ENCODE measurements at regions of chr12 and their contacts with region 1.

Region 1: DNA sequence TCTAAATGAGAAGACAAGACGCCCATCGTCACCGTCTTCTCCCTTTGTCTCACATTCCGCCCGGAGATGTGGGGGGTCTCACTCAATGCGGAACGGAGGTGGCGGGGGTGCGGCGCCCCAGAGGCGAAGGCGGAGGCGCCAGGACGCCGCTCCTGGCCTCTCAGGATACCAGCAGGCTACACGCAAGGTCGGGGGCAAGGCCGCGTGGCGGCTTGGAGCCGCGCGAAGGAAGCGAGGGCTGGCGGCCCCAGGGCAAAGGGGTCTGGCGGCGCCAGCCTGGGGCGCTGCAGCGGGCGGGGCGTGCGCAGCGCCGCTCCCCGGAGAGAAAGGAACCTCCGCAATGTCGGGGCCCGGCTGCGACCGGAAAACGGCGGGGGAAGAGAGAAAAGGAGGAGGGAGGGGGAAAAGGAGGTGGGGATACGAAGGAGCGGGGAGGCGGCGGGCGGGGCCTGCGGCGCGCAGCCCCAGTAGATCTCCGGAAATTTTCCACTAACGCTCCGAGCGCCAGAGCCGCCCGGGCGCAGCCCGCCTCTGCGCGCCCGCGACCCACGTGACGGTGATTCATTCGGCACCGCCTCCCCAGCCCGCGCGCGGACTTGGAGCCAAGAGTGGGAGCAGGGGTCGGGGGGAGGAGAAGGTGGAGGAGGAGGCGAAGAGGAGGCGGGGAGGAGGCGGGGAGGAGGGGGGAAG is 10.5 kb upstream of the SLC38A2 start:
- DNase-seq: peak; percentile 98
- ATAC-seq: peak; percentile 62
- H3K4me3 ChIP-seq: peak overlapping the region; percentile 77
- H3K27ac ChIP-seq: peak overlapping the region; percentile 94
- H3K4me1 ChIP-seq: peaks cover 44% of the 10 kb centered on the region
- H3K27me3 ChIP-seq: no peaks in the 10 kb centered on the region
- CTCF ChIP-seq: peak; percentile 40; the same call in 1 of the 2 replicates

Region 2: GRCh38 chr12:46209914-46210872 is 172.9 kb before region 1 on chr12:
- CTCF ChIA-PET with region 1: no interaction called
- POLR2A ChIA-PET with region 1: no interaction called
- intact Hi-C with region 1: no loop called
- DNase-seq: peak; percentile 91
- ATAC-seq: peak; percentile 75
- H3K4me3 ChIP-seq: peak overlapping the region; percentile 26; the same call in 1 of the 2 replicates
- H3K27ac ChIP-seq: peak overlapping the region; percentile 90
- H3K4me1 ChIP-seq: peaks cover 35% of the 10 kb centered on the region
- H3K27me3 ChIP-seq: no peaks in the 10 kb centered on the region
- CTCF ChIP-seq: no peak

Region 3: GRCh38 chr12:46372544-46373110 is 10.5 kb before region 1 on chr12 and contains the start of gene SLC38A2:
- CTCF ChIA-PET with region 1: no interaction called
- POLR2A ChIA-PET with region 1: interaction called, 8 read pairs
- intact Hi-C with region 1: loop called (anchors 1 kb)
- DNase-seq: peak; percentile 93
- ATAC-seq: peak; percentile 85
- H3K4me3 ChIP-seq: peak within 1 kb of the TSS; percentile 83
- H3K27ac ChIP-seq: peak within 1 kb of the TSS; percentile 80
- H3K4me1 ChIP-seq: peaks cover 40% of the 10 kb centered on the region
- H3K27me3 ChIP-seq: no peaks in the 10 kb centered on the region
- CTCF ChIP-seq: no peak
- total RNA-seq, gene SLC38A2: 214 and 232 TPM in 2 replicates

Region 4: GRCh38 chr12:46430340-46430948 is 47.3 kb after region 1 on chr12:
- CTCF ChIA-PET with region 1: interaction called, 5 read pairs
- POLR2A ChIA-PET with region 1: no interaction called
- intact Hi-C with region 1: loop called (anchors 1 kb)
- DNase-seq: peak; percentile 95
- ATAC-seq: peak; percentile 77
- H3K4me3 ChIP-seq: peak overlapping the region; percentile 28; the same call in 1 of the 2 replicates
- H3K27ac ChIP-seq: peak overlapping the region; percentile 96
- H3K4me1 ChIP-seq: peaks cover 45% of the 10 kb centered on the region
- H3K27me3 ChIP-seq: no peaks in the 10 kb centered on the region
- CTCF ChIP-seq: no peak

Region 5: DNA sequence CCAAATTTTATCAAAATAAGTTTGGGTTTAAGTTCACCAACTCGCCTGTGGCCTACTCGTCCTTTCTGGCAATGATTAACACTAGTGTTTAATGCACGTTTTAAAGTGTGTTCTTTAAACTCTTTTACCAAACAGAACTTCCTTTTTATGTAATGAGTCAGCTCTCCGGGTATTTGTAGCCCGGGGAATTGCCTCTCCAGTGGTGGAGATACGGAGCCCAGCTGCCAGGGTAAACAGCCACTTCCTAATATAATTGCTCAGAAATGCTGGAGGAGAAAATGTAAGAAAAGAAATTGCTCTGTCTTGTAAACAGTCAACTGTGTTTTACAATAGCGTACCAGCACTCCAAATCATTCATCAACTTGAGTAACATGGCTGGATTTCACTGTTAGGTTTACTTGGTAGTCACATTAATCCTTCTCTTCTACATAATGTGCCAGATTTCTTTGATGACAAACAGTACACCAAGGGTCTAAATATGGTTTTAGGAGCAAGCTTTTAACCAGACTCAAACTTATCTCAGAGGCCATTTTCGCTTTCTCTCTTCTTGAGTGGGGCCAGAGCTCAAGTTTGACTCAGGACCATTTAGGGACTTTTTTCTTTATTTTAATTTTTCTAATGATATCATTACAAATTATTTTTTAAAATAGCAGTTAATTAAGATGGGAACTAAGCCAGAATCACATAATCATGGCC is 90.7 kb after region 1 on chr12:
- CTCF ChIA-PET with region 1: no interaction called
- POLR2A ChIA-PET with region 1: interaction called, 4 read pairs
- intact Hi-C with region 1: loop called (anchors 1 kb)
- DNase-seq: peak; percentile 95
- ATAC-seq: peak; percentile 85
- H3K4me3 ChIP-seq: peak overlapping the region; percentile 52; the same call in 1 of the 2 replicates
- H3K27ac ChIP-seq: peak overlapping the region; percentile 83
- H3K4me1 ChIP-seq: peaks cover 59% of the 10 kb centered on the region
- H3K27me3 ChIP-seq: no peaks in the 10 kb centered on the region
- CTCF ChIP-seq: no peak

Region 6: DNA sequence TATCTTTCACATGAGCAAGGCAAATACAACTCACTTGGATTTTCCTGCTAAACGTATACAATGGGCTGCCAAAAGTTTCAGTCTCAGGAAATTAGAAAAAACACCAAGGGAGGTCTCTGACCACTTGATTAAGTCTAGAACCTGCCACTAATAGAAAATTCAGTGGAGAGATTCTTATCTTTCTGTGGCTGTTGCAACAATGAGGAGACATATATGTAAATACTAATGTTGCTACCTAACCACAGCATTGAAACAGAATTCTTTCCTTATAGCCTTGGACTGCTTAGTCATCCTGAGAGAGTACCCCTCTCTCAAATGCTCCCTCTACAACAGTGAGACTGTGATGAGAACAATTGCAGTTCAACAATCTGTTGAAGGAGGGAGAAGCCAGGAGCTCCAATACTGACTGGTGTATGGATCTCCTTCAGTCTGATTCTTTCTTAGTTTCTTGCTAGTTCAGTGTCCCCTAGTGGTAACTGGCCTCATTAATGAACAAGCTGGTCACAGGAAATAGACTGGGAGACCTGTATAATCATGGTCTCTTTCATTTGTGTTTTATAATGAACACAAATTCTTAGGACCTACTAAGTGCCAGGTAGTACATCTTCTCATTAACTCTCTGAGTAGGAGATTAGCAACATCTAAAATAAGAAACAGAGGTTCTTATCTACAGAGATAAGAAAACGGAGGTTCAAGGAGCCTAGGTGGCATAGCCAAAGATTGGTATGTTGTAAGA is 278.2 kb after region 1 on chr12:
- CTCF ChIA-PET with region 1: interaction called, 4 read pairs
- POLR2A ChIA-PET with region 1: no interaction called
- intact Hi-C with region 1: loop called (anchors 2 kb)
- DNase-seq: peak; percentile 80
- ATAC-seq: peak; percentile 53
- H3K4me3 ChIP-seq: no peak overlapping the region
- H3K27ac ChIP-seq: peak overlapping the region; percentile 56
- H3K4me1 ChIP-seq: peaks cover 57% of the 10 kb centered on the region
- H3K27me3 ChIP-seq: no peaks in the 10 kb centered on the region
- CTCF ChIP-seq: peak; percentile 87

Region 7: GRCh38 chr12:46944088-46944487 is 561.0 kb after region 1 on chr12:
- CTCF ChIA-PET with region 1: no interaction called
- POLR2A ChIA-PET with region 1: no interaction called
- intact Hi-C with region 1: loop called (anchors 5 kb)
- DNase-seq: peak; percentile 64
- ATAC-seq: no peak
- H3K4me3 ChIP-seq: no peak overlapping the region
- H3K27ac ChIP-seq: no peak overlapping the region
- H3K4me1 ChIP-seq: peaks cover 50% of the 10 kb centered on the region
- H3K27me3 ChIP-seq: no peaks in the 10 kb centered on the region
- CTCF ChIP-seq: peak; percentile 47

Measured in PC-3 (cell line).